CD8-positive, alpha-beta T cell (primary cell): ENCODE measurements at regions of chr14 and their contacts with region 1.

Region 1: GRCh38 chr14:59213368-59214315 is 25.2 kb downstream of the DAAM1 start:
- DNase-seq: no peak
- ATAC-seq: no peak
- H3K4me3 ChIP-seq: no peak overlapping the region
- H3K4me3 Mint-ChIP-seq: no peak overlapping the region
- H3K27ac ChIP-seq: no peak overlapping the region
- H3K27ac Mint-ChIP-seq: no peak overlapping the region
- H3K4me1 ChIP-seq: no peaks in the 10 kb centered on the region
- H3K4me1 Mint-ChIP-seq: peaks cover 8% of the 10 kb centered on the region
- H3K27me3 ChIP-seq: no peaks in the 10 kb centered on the region
- H3K27me3 Mint-ChIP-seq: no peaks in the 10 kb centered on the region
- CTCF ChIP-seq: no peak

Region 2: GRCh38 chr14:58882577-58883018 is 331.0 kb before region 1 on chr14:
- CTCF ChIA-PET with region 1: no interaction called
- POLR2A ChIA-PET with region 1: no interaction called
- intact Hi-C with region 1: no loop called
- DNase-seq: no peak
- ATAC-seq: no peak
- H3K4me3 ChIP-seq: no peak overlapping the region
- H3K4me3 Mint-ChIP-seq: no peak overlapping the region
- H3K27ac ChIP-seq: no peak overlapping the region
- H3K27ac Mint-ChIP-seq: no peak overlapping the region
- H3K4me1 ChIP-seq: no peaks in the 10 kb centered on the region
- H3K4me1 Mint-ChIP-seq: no peaks in the 10 kb centered on the region
- H3K27me3 ChIP-seq: no peaks in the 10 kb centered on the region
- H3K27me3 Mint-ChIP-seq: no peaks in the 10 kb centered on the region
- CTCF ChIP-seq: no peak

Region 3: DNA sequence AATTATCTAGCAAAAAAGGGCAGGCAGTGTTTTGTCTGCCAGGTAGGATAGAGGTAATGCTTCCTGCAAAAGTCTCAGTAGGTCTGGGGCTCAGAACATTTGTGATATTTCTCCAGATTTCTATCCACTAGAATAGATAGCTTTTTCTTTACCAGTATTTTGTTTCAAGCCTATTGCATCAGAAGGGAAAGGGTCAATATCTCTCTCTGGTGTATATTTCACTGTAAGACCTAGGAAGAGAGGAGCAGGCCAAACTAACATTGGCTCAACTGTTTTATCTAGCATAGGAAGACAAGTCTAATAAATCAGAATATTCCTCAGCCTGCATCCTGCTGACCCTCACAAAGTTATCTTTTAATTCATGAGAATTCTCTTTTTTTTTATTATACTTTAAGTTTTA is 131.9 kb before region 1 on chr14:
- CTCF ChIA-PET with region 1: no interaction called
- POLR2A ChIA-PET with region 1: no interaction called
- intact Hi-C with region 1: no loop called
- DNase-seq: no peak
- ATAC-seq: no peak
- H3K4me3 ChIP-seq: no peak overlapping the region
- H3K4me3 Mint-ChIP-seq: no peak overlapping the region
- H3K27ac ChIP-seq: no peak overlapping the region
- H3K27ac Mint-ChIP-seq: no peak overlapping the region
- H3K4me1 ChIP-seq: no peaks in the 10 kb centered on the region
- H3K4me1 Mint-ChIP-seq: no peaks in the 10 kb centered on the region
- H3K27me3 ChIP-seq: peaks cover 0 to 5% of the 10 kb centered on the region in 2 experiments
- H3K27me3 Mint-ChIP-seq: peaks cover 18% of the 10 kb centered on the region
- CTCF ChIP-seq: no peak

Region 4: GRCh38 chr14:59228421-59228820 is 14.8 kb after region 1 on chr14:
- CTCF ChIA-PET with region 1: no interaction called
- POLR2A ChIA-PET with region 1: no interaction called
- intact Hi-C with region 1: no loop called
- DNase-seq: no peak
- ATAC-seq: no peak
- H3K4me3 ChIP-seq: no peak overlapping the region
- H3K4me3 Mint-ChIP-seq: no peak overlapping the region
- H3K27ac ChIP-seq: no peak overlapping the region
- H3K27ac Mint-ChIP-seq: no peak overlapping the region
- H3K4me1 ChIP-seq: peaks cover 10% of the 10 kb centered on the region
- H3K4me1 Mint-ChIP-seq: peaks cover 29% of the 10 kb centered on the region
- H3K27me3 ChIP-seq: no peaks in the 10 kb centered on the region
- H3K27me3 Mint-ChIP-seq: no peaks in the 10 kb centered on the region
- CTCF ChIP-seq: no peak

Region 5: DNA sequence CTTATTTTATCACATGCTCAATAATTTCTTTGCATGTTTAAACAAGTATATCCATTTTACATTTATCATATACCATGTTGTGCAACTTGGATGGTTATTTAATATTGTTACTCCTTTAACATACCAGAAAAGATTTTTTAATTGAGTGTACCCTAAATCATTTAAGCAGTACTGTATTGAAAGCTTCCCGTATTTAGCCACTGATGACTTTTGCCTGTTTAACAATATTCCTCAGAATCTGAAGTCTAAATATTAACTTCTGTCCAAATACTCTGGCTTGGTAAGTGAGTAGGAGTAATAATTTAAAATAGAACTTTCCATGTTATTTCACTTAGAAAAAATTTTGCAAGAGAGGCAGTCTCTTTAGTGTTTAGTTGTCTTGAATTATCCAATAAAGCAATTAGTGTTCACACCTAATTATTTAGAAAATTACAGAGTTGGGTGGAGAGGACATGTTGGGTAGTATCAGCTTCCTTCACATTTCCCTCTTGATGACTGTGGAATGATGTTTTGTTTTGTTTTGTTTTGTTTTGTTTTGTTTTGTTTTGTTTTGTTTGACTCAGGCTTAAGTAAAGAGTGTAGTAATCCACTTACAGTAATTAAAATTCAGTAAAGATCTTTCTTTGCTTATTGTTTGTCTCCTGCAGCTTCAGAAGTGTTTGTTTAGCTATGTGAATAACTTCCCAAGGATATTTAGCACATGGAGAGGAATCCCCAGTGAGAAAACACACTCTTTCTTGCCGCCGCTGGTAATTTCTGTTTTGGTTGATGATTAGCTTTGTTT is 34.4 kb after region 1 on chr14:
- CTCF ChIA-PET with region 1: no interaction called
- POLR2A ChIA-PET with region 1: no interaction called
- intact Hi-C with region 1: loop called in 1 of 2 experiments (anchors 1 kb)
- DNase-seq: no peak
- ATAC-seq: no peak
- H3K4me3 ChIP-seq: no peak overlapping the region
- H3K4me3 Mint-ChIP-seq: no peak overlapping the region
- H3K27ac ChIP-seq: no peak overlapping the region
- H3K27ac Mint-ChIP-seq: no peak overlapping the region
- H3K4me1 ChIP-seq: no peaks in the 10 kb centered on the region
- H3K4me1 Mint-ChIP-seq: no peaks in the 10 kb centered on the region
- H3K27me3 ChIP-seq: no peaks in the 10 kb centered on the region
- H3K27me3 Mint-ChIP-seq: no peaks in the 10 kb centered on the region
- CTCF ChIP-seq: no peak

Region 6: GRCh38 chr14:59500732-59501131 is 287.1 kb after region 1 on chr14:
- CTCF ChIA-PET with region 1: no interaction called
- POLR2A ChIA-PET with region 1: no interaction called
- intact Hi-C with region 1: no loop called
- DNase-seq: no peak
- ATAC-seq: no peak
- H3K4me3 ChIP-seq: no peak overlapping the region
- H3K4me3 Mint-ChIP-seq: no peak overlapping the region
- H3K27ac ChIP-seq: no peak overlapping the region
- H3K27ac Mint-ChIP-seq: no peak overlapping the region
- H3K4me1 ChIP-seq: peaks cover 4% of the 10 kb centered on the region
- H3K4me1 Mint-ChIP-seq: peaks cover 22% of the 10 kb centered on the region
- H3K27me3 ChIP-seq: no peaks in the 10 kb centered on the region
- H3K27me3 Mint-ChIP-seq: no peaks in the 10 kb centered on the region
- CTCF ChIP-seq: no peak